HEK293 (cell line): ENCODE measurements at regions of chrX and their contacts with region 1.

Region 1: GRCh38 chrX:69285881-69286564 is 120.8 kb upstream of the PJA1 start:
- H3K4me3 ChIP-seq: no peak overlapping the region
- H3K27ac ChIP-seq: no peak overlapping the region
- H3K4me1 ChIP-seq: no peaks in the 10 kb centered on the region
- CTCF ChIP-seq: peak; percentile 95

Region 2: GRCh38 chrX:69268611-69269010 is 17.4 kb before region 1 on chrX:
- CTCF ChIA-PET with region 1: interaction called, 10 read pairs
- POLR2A ChIA-PET with region 1: no interaction called
- H3K4me3 ChIP-seq: no peak overlapping the region
- H3K27ac ChIP-seq: no peak overlapping the region
- H3K4me1 ChIP-seq: no peaks in the 10 kb centered on the region
- CTCF ChIP-seq: no peak

Region 3: GRCh38 chrX:69305333-69306062 is 19.5 kb after region 1 on chrX:
- CTCF ChIA-PET with region 1: no interaction called
- POLR2A ChIA-PET with region 1: no interaction called
- H3K4me3 ChIP-seq: no peak overlapping the region
- H3K27ac ChIP-seq: no peak overlapping the region
- H3K4me1 ChIP-seq: no peaks in the 10 kb centered on the region
- CTCF ChIP-seq: no peak